MCF 10A (cell line): ENCODE measurements at regions of chr5 and their contacts with region 1.

Region 1: GRCh38 chr5:140953234-140953633 is 13.0 kb upstream of the PCDHAC2 start:
- DNase-seq: no peak
- H3K4me3 Mint-ChIP-seq: no peak overlapping the region
- H3K27ac Mint-ChIP-seq: no peak overlapping the region
- H3K4me1 Mint-ChIP-seq: peaks cover 20% of the 10 kb centered on the region
- H3K27me3 Mint-ChIP-seq: no peaks in the 10 kb centered on the region
- CTCF ChIP-seq: no peak

Region 2: DNA sequence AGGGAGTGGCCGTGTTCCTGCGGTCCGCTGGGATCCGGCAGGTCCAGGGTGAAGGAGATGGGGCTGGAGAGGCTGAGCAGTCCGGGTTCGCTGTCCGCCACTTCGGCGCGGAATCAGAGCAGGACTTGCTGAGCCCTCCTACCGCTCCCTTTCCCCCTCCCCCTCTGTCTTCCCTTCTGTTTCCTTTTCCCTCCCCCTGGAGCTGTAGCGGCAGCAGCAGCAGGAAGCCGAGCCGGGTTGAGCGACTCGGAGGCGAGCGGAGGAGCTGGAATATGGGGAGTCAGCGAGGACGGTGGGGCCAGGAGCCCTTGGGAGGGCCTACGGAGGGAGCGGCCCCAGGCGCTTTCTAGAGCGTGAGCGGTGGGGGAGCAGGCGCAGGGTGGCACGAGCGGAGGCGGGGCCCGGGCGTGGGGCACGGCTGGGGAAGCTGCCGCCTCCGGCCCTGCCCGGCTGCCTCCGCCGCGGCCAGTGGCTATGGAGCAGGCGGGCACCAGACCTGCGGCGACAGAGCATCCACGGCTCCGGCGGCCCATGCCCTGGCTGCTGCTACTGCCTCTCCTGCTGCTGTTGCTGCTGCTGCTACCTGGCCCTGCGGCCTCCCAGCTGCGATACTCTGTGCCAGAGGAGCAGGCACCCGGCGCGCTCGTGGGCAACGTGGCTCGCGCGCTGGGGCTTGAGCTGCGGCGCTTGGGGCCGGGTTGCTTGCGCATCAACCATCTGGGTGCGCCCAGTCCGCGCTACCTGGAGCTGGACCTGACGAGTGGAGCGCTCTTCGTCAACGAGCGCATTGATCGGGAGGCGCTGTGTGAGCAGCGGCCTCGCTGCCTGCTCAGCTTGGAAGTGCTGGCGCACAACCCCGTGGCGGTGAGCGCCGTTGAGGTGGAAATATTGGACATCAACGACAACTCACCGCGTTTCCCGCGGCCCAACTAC is 13.3 kb after region 1 on chr5 and contains the start of gene PCDHAC2:
- CTCF ChIA-PET with region 1: interaction called, 5 read pairs
- POLR2A ChIA-PET with region 1: interaction called, 26 read pairs
- intact Hi-C with region 1: no loop called
- DNase-seq: peak; percentile 55
- H3K4me3 Mint-ChIP-seq: peak within 1 kb of the TSS; percentile 94
- H3K27ac Mint-ChIP-seq: peak within 1 kb of the TSS; percentile 90
- H3K4me1 Mint-ChIP-seq: peaks cover 24% of the 10 kb centered on the region
- H3K27me3 Mint-ChIP-seq: no peaks in the 10 kb centered on the region
- CTCF ChIP-seq: no peak
- total RNA-seq, gene PCDHAC2: 9.3 and 12.3 TPM in 2 replicates

Region 3: GRCh38 chr5:141313711-141314110 is 360.5 kb after region 1 on chr5:
- CTCF ChIA-PET with region 1: no interaction called
- POLR2A ChIA-PET with region 1: no interaction called
- intact Hi-C with region 1: no loop called
- DNase-seq: no peak
- H3K4me3 Mint-ChIP-seq: no peak overlapping the region
- H3K27ac Mint-ChIP-seq: no peak overlapping the region
- H3K4me1 Mint-ChIP-seq: no peaks in the 10 kb centered on the region
- H3K27me3 Mint-ChIP-seq: no peaks in the 10 kb centered on the region
- CTCF ChIP-seq: no peak